Heart left ventricle (tissue), 16 donors: ENCODE measurements at regions of chr11 and their contacts with region 1.

Region 1: DNA sequence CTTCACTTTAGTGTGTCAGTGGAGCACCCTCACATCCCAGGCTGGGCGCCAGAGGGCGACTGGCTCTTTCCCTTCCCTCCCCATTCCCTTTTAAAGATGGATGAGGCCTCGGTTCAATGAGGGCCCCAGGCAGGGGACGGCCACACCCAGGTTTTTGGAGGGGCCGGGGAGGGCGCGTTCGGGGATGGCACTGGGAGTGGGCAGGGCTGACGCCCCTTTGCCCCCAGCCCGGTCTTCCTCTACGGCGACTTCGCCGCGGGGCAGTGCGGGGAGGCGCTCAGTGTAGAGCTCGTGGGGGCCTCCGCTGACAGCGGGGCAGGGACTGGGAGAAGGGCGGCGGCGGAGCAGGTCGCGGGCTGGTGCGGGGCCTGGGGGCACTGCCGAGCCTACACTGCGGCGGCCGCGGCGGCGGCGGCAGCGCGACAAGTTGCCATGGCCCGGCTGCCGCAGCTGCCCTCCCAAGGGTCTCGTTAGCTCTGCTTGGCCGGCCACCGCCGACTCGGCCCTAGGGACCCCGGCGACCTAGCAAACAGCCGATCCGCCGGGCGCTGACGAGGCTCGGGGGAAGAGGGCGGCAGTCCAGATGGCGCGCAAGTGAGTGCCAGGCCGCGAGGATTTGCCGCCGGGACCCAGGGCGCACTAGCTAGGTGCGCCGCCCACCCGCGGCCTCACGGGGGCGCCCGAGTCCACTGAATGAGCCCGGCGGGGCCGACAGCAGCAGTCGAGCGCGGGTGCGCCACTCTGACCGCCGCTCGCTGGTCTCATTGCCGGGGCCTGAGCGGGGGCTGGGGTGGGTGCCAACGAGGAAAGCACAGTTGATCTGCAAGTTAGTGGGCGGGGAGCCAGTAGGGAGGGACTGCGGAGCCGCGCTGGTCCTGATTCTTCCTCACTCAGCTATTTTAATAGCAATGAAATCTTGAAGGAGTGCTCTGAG is 92.7 kb downstream of the RRM1 start:
- DNase-seq: peak; percentile 89 to 96 (median 95)
- ATAC-seq: peak; percentile 53 to 90 (median 82)
- H3K4me3 ChIP-seq: peak overlapping the region; percentile 48 to 75 (median 64)
- H3K27ac ChIP-seq: peak overlapping the region in 6 of 12 donors; percentile 7 to 78 (median 68)
- H3K4me1 ChIP-seq: peaks cover 0 to 35% (median 7%) of the 10 kb centered on the region in 12 donors
- H3K27me3 ChIP-seq: no peaks in the 10 kb centered on the region
- CTCF ChIP-seq: peak; percentile 91 to 98 (median 95)
- POLR2A ChIP-seq: no peak

Region 2: DNA sequence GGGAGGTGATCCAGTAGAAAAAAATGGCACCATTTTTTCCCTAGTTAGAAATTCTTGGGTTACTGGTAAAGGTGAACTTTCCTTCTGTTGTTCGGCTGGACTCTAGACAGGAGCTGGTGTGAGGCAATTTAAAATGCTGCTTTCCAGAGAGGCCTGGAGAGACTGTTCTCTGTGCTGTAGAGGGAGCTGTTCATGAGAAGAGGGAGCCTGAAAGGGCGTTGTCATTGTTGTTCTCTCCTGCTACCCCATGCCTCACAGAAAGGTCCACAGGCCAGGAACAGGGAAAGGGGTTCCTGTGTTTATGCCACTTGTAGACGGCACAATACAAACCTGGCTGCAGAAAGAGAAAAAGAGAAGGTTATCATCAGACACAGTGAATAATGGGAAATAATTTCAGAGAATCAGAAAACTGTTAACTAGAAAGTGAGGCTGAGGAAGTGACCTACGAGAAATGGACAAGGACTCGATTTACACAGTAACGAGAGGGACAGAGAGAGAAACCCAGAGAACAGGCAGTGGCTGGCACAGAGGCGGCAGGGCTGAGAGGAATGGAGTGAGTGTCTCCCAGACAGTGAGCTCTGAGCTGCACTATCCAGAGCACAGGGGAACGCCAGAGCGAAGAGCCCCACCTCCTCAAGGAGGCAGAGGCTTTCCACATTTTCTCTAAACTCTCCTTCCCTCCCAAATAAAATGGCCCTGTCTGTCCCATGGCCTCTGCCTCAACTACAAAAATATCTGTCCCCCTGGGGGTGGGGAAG is 16.5 kb after region 1 on chr11:
- intact Hi-C with region 1: no loop called
- DNase-seq: no peak
- ATAC-seq: peak; percentile 83 to 93 (median 90)
- H3K4me3 ChIP-seq: no peak overlapping the region
- H3K27ac ChIP-seq: peak overlapping the region in 7 of 12 donors; percentile 24 to 63 (median 40)
- H3K4me1 ChIP-seq: peaks cover 0 to 18% (median 1%) of the 10 kb centered on the region in 12 donors
- H3K27me3 ChIP-seq: peaks cover 0 to 5% (median 0%) of the 10 kb centered on the region in 9 donors
- CTCF ChIP-seq: peak in 7 of 12 donors; percentile 15 to 39 (median 28)
- POLR2A ChIP-seq: no peak

Region 3: DNA sequence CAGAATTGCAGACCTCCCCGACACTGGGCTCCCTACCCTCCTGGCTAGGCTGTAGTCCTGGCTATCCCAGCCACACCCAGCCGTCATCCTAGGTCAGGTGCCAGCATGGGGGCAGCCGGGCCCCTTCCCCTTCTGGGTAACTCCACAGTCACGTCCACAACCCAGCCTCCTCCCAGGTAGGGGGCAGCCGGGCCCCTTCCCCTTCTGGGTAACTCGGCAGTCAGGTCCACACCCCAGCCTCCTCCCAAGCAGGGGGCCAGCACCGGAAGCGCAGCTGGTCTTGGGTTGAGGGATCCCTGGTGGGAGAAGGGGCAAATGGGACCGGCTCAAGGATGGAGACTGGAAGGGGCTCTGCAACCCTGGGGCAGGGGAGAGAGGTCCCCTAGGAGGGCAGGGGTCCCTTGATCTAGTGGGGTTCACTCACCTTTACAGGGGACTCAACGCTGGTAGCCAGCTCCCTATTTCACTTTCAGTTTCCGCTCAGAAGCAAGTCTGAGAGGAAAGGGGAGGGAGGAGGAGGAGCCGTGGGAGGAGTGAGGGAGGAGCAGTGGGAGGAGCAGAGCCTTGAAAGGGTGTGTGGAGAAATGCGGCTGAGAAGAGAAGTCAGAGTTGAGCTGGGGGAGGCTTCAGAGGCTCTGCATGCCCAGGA is 206.0 kb after region 1 on chr11 and contains the start of gene TRIM21:
- intact Hi-C with region 1: loop called in 1 of 10 experiments (anchors 5 kb)
- DNase-seq: peak; percentile 81 to 87 (median 84)
- ATAC-seq: peak; percentile 94 to 100 (median 100)
- H3K4me3 ChIP-seq: peak within 1 kb of the TSS; percentile 57 to 99 (median 87)
- H3K27ac ChIP-seq: peak within 1 kb of the TSS in 11 of 12 donors; percentile 69 to 95 (median 83)
- H3K4me1 ChIP-seq: peaks cover 0 to 29% (median 5%) of the 10 kb centered on the region in 12 donors
- H3K27me3 ChIP-seq: peaks cover 0 to 7% (median 0%) of the 10 kb centered on the region in 9 donors
- CTCF ChIP-seq: no peak
- POLR2A ChIP-seq: peak in 1 of 2 donors; percentile 69
- total RNA-seq, gene TRIM21: 7.1 to 36.0 (median 8.5) TPM

Region 4: GRCh38 chr11:4539603-4540219 is 352.4 kb after region 1 on chr11:
- intact Hi-C with region 1: loop called (anchors 1 to 5 kb)
- DNase-seq: peak in 3 of 5 donors; percentile 22 to 64 (median 22)
- ATAC-seq: peak; percentile 47 to 81 (median 74)
- H3K4me3 ChIP-seq: no peak overlapping the region
- H3K27ac ChIP-seq: no peak overlapping the region
- H3K4me1 ChIP-seq: no peaks in the 10 kb centered on the region
- H3K27me3 ChIP-seq: peaks cover 0 to 8% (median 0%) of the 10 kb centered on the region in 9 donors
- CTCF ChIP-seq: peak; percentile 49 to 80 (median 67)
- POLR2A ChIP-seq: no peak

Region 5: GRCh38 chr11:4636962-4637661 is 449.8 kb after region 1 on chr11 and contains the start of gene OR51D1:
- intact Hi-C with region 1: loop called in 1 of 10 experiments (anchors 10 kb)
- DNase-seq: peak; percentile 70 to 84 (median 75)
- ATAC-seq: peak; percentile 88 to 98 (median 94)
- H3K4me3 ChIP-seq: peak within 1 kb of the TSS in 10 of 12 donors; percentile 28 to 52 (median 38)
- H3K27ac ChIP-seq: peak within 1 kb of the TSS in 3 of 12 donors; percentile 27 to 39 (median 37)
- H3K4me1 ChIP-seq: peaks cover 0 to 17% (median 7%) of the 10 kb centered on the region in 12 donors
- H3K27me3 ChIP-seq: peaks cover 0 to 3% (median 0%) of the 10 kb centered on the region in 9 donors
- CTCF ChIP-seq: peak; percentile 84 to 97 (median 92)
- POLR2A ChIP-seq: no peak
- total RNA-seq, gene OR51D1: not detected

Region 6: DNA sequence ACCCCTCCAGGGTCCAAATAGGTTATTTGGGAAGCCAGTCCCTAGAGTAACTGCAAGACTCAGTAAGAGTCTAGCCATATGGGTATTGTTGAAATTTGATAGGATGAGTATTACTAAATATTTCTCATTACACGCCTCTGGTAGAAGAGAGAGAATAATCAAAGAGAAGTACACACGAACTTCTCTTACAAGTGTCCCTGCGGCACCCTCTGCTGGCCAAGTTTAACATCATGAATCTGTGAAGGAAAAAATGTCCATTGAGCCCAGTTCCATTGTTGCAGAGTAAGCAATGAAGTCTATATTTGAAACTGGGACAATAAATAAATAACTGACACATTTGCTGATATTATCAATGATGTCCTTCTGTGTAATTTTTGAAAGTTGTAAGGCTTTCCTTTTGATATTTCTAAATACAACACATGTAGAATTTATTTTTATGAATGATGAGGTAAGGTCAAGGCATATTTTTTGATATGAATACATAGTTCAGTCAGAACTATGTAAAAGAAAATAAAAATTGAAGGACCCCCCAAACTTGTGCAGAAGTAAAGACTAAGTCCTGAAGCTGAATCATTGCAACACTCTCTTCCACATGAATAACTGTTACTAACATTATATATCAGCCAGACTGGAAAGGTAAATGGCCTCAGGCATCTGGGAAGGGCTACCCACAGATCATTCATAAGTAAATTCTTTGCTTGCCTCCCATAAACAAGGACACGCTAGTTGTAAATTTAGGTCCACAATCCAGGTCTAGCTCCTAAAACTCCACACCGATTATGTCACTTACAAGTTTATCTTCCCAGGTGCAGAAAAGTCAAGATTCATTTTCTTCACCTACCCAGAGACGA is 817.3 kb after region 1 on chr11:
- intact Hi-C with region 1: loop called in 8 of 10 experiments (anchors 5 to 10 kb)
- DNase-seq: peak in 4 of 5 donors; percentile 35 to 58 (median 40)
- ATAC-seq: peak in 1 of 4 donors; percentile 58
- H3K4me3 ChIP-seq: no peak overlapping the region
- H3K27ac ChIP-seq: no peak overlapping the region
- H3K4me1 ChIP-seq: no peaks in the 10 kb centered on the region
- H3K27me3 ChIP-seq: peaks cover 0 to 5% (median 0%) of the 10 kb centered on the region in 9 donors
- CTCF ChIP-seq: peak; percentile 40 to 68 (median 55)
- POLR2A ChIP-seq: no peak